B cell (primary cell): ENCODE measurements at regions of chr9 and their contacts with region 1.

Region 1: GRCh38 chr9:22008736-22009562 is at the start of gene CDKN2B:
- DNase-seq: peak; percentile 83
- ATAC-seq: peak; percentile 89
- H3K4me3 ChIP-seq: peak within 1 kb of the TSS; percentile 34 to 78 (median 69)
- H3K4me3 Mint-ChIP-seq: peak within 1 kb of the TSS; percentile 86
- H3K27ac ChIP-seq: peak within 1 kb of the TSS in 1 of 2 donors; percentile 9
- H3K27ac Mint-ChIP-seq: peak within 1 kb of the TSS; percentile 41
- H3K4me1 ChIP-seq: peaks cover 30 to 41% of the 10 kb centered on the region in 2 donors
- H3K4me1 Mint-ChIP-seq: peaks cover 34% of the 10 kb centered on the region
- H3K27me3 ChIP-seq: peaks cover 0 to 53% (median 45%) of the 10 kb centered on the region in 4 experiments
- H3K27me3 Mint-ChIP-seq: peaks cover 36% of the 10 kb centered on the region
- CTCF ChIP-seq: peak; percentile 98
- total RNA-seq, gene CDKN2B: 0.42 and 1.3 TPM in 2 replicates

Region 2: DNA sequence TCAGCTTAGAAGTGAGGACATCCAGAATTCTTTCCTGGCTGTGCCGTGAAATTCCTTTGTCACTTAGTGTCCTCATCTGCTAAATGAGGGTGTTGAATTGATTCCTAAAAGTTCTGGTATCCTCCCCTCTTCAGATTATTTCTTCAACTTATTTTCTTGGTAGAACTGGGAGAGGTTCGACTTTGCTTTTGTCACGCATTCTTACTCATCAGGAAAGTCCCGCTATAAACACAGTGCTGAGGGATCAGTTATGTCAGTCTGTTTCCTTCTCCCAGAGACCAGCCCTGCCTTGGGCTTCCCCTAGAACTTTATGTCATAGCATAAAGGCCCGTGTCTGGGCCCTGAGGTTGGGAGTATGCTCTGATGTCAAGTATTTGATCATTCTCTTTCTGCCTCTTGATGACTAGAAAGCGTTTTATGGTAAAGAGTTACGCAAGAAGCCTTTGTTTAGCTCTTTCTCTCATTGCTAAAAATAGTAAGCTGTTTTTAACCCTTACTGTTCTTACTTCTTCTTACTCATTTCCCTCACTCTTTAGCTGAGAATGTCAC is 176.9 kb before region 1 on chr9:
- CTCF ChIA-PET with region 1: interaction called, 10 read pairs
- POLR2A ChIA-PET with region 1: no interaction called
- intact Hi-C with region 1: no loop called
- DNase-seq: peak; percentile 51
- ATAC-seq: peak; percentile 19
- H3K4me3 ChIP-seq: no peak overlapping the region
- H3K4me3 Mint-ChIP-seq: peak overlapping the region; percentile 33
- H3K27ac ChIP-seq: peak overlapping the region in 1 of 2 donors; percentile 75
- H3K27ac Mint-ChIP-seq: peak overlapping the region; percentile 78
- H3K4me1 ChIP-seq: peaks cover 28 to 29% of the 10 kb centered on the region in 2 donors
- H3K4me1 Mint-ChIP-seq: peaks cover 44% of the 10 kb centered on the region
- H3K27me3 ChIP-seq: no peaks in the 10 kb centered on the region
- H3K27me3 Mint-ChIP-seq: no peaks in the 10 kb centered on the region
- CTCF ChIP-seq: no peak

Region 3: DNA sequence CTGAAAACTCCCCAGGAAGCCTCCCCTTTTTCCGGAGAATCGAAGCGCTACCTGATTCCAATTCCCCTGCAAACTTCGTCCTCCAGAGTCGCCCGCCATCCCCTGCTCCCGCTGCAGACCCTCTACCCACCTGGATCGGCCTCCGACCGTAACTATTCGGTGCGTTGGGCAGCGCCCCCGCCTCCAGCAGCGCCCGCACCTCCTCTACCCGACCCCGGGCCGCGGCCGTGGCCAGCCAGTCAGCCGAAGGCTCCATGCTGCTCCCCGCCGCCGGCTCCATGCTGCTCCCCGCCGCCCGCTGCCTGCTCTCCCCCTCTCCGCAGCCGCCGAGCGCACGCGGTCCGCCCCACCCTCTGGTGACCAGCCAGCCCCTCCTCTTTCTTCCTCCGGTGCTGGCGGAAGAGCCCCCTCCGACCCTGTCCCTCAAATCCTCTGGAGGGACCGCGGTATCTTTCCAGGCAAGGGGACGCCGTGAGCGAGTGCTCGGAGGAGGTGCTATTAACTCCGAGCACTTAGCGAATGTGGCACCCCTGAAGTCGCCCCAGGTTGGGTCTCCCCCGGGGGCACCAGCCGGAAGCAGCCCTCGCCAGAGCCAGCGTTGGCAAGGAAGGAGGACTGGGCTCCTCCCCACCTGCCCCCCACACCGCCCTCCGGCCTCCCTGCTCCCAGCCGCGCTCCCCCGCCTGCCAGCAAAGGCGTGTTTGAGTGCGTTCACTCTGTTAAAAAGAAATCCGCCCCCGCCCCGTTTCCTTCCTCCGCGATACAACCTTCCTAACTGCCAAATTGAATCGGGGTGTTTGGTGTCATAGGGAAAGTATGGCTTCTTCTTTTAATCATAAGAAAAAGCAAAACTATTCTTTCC is 34.2 kb before region 1 on chr9:
- CTCF ChIA-PET with region 1: interaction called, 43 read pairs
- POLR2A ChIA-PET with region 1: no interaction called
- intact Hi-C with region 1: loop called (anchors 2 kb)
- DNase-seq: peak; percentile 72
- ATAC-seq: peak; percentile 48
- H3K4me3 ChIP-seq: peak overlapping the region in 4 of 5 experiments; percentile 35 to 60 (median 50)
- H3K4me3 Mint-ChIP-seq: peak overlapping the region; percentile 69
- H3K27ac ChIP-seq: no peak overlapping the region
- H3K27ac Mint-ChIP-seq: peak overlapping the region; percentile 56
- H3K4me1 ChIP-seq: peaks cover 24 to 34% of the 10 kb centered on the region in 2 donors
- H3K4me1 Mint-ChIP-seq: peaks cover 22% of the 10 kb centered on the region
- H3K27me3 ChIP-seq: peaks cover 7 to 93% (median 84%) of the 10 kb centered on the region in 4 experiments
- H3K27me3 Mint-ChIP-seq: peaks cover 77% of the 10 kb centered on the region
- CTCF ChIP-seq: no peak

Region 4: DNA sequence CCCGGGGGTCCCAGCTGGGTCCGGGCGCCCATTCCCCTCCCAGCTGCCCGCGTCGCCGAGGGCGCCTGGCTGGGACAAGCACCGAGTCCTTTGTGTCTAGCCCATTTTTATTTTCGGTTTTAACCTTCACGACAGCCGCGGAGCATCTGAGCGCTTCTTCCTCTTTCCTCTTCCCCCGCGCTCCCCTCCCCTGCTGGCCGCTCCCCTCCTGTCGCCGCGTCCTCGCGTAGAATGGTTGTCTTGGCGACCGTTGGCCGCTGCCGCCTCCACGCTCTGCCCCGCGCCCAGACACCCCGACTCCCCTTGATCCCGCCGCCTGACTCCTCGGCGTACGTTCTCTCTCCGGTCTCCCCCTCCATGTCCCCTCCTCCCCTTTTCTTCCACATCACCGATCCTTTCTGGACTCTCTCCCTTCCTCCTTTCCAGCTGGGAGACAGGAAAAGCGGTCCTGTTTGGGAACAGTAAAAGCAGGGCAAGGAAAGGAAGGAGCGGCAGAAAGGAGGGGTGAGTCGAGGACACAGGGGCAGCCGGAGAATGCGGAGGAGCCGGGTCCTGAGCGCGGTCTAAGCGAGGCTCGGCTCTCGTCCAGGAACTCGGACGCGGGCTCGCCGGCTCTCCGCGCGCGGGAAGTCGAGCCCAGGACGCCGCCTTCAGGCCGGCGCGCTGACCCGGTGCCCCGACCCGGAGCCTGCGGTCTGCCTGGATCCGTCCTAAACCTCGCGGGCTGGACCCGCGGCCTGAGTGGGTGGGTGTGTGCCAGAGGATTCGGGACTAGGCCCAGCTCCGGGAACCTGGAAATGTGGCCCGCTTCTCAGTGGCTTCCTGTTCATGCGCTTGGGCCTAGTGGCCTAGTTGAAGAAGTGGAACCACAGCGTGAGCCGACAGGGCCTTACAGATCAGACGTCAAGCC is 13.5 kb before region 1 on chr9:
- CTCF ChIA-PET with region 1: interaction called, 60 read pairs
- POLR2A ChIA-PET with region 1: interaction called, 7 read pairs
- intact Hi-C with region 1: loop called (anchors 1 kb)
- DNase-seq: peak; percentile 96
- ATAC-seq: peak; percentile 78
- H3K4me3 ChIP-seq: peak overlapping the region; percentile 76 to 97 (median 86)
- H3K4me3 Mint-ChIP-seq: peak overlapping the region; percentile 97
- H3K27ac ChIP-seq: peak overlapping the region; percentile 87 to 94
- H3K27ac Mint-ChIP-seq: peak overlapping the region; percentile 95
- H3K4me1 ChIP-seq: peaks cover 18 to 19% of the 10 kb centered on the region in 2 donors
- H3K4me1 Mint-ChIP-seq: peaks cover 19% of the 10 kb centered on the region
- H3K27me3 ChIP-seq: peaks cover 0 to 11% (median 2%) of the 10 kb centered on the region in 4 experiments
- H3K27me3 Mint-ChIP-seq: no peaks in the 10 kb centered on the region
- CTCF ChIP-seq: peak; percentile 15

Region 5: GRCh38 chr9:22238809-22239684 is 230.1 kb after region 1 on chr9:
- CTCF ChIA-PET with region 1: interaction called, 56 read pairs
- POLR2A ChIA-PET with region 1: no interaction called
- intact Hi-C with region 1: loop called (anchors 1 kb)
- DNase-seq: peak; percentile 58
- ATAC-seq: no peak
- H3K4me3 ChIP-seq: no peak overlapping the region
- H3K4me3 Mint-ChIP-seq: no peak overlapping the region
- H3K27ac ChIP-seq: no peak overlapping the region
- H3K27ac Mint-ChIP-seq: peak overlapping the region; percentile 27
- H3K4me1 ChIP-seq: peaks cover 32 to 38% of the 10 kb centered on the region in 2 donors
- H3K4me1 Mint-ChIP-seq: peaks cover 56% of the 10 kb centered on the region
- H3K27me3 ChIP-seq: no peaks in the 10 kb centered on the region
- H3K27me3 Mint-ChIP-seq: no peaks in the 10 kb centered on the region
- CTCF ChIP-seq: peak; percentile 58

Region 6: DNA sequence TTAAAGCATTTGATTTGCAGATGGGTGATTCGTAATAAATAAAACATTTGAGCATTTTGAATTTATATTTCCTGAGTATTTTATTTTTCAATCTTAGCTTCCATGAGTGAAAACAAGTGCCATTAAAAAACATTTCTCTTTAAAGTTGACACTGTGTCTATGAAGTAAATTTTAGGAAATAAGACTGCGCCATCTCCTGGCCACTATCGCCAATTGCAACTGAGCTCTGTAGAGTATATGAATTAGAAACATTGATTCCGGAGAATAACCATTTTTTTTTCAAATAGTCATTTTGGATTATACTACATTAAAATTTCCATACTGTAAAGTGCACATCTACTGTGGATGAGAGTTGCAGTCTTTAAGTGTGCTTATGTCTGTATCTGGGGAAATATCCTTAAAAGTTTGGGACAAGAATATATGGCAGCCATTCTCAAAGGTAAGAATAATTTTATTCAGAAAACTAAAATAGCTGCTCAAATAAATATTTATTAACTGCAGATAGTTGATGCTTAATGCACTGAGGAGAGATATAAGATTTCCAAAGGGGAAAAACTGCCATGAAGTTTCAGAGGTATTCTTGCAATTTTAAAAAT is 443.6 kb after region 1 on chr9:
- CTCF ChIA-PET with region 1: interaction called, 8 read pairs
- POLR2A ChIA-PET with region 1: no interaction called
- intact Hi-C with region 1: loop called (anchors 2 kb)
- DNase-seq: peak; percentile 64
- ATAC-seq: no peak
- H3K4me3 ChIP-seq: no peak overlapping the region
- H3K4me3 Mint-ChIP-seq: no peak overlapping the region
- H3K27ac ChIP-seq: no peak overlapping the region
- H3K27ac Mint-ChIP-seq: no peak overlapping the region
- H3K4me1 ChIP-seq: peaks cover 3 to 6% of the 10 kb centered on the region in 2 donors
- H3K4me1 Mint-ChIP-seq: peaks cover 6% of the 10 kb centered on the region
- H3K27me3 ChIP-seq: peaks cover 0 to 33% (median 12%) of the 10 kb centered on the region in 4 experiments
- H3K27me3 Mint-ChIP-seq: peaks cover 62% of the 10 kb centered on the region
- CTCF ChIP-seq: peak; percentile 95